HEK293T (cell line): ENCODE measurements at regions of chr5 and their contacts with region 1.

Region 1: DNA sequence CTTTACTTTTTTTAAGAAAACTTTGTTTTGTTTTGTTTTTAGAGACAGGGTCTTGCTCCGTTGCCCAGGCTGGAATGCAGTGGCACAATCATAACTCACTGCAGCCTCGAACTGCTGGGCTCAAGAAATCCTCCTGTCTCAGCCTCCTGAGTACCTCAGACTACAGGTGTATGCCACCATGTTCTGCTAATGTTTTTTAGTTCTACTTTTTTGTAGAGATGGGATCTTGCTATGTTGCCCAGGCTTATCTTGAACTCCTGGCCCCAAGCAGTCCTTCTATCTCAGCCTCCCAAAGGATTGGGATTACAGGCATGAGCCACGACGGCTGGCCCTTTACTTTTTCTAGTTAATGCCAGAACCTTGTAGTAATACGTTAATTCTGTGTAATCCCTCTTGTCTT is 36.0 kb downstream of the IPO11 start:
- DNase-seq: no peak

Region 2: GRCh38 chr5:62431735-62432620 is 16.6 kb before region 1 on chr5:
- CTCF ChIA-PET with region 1: interaction called, 12 read pairs
- POLR2A ChIA-PET with region 1: no interaction called
- DNase-seq: no peak